Dorsolateral prefrontal cortex (tissue), 120 donors: ENCODE measurements at regions of chr1 and their contacts with region 1.

Region 1: DNA sequence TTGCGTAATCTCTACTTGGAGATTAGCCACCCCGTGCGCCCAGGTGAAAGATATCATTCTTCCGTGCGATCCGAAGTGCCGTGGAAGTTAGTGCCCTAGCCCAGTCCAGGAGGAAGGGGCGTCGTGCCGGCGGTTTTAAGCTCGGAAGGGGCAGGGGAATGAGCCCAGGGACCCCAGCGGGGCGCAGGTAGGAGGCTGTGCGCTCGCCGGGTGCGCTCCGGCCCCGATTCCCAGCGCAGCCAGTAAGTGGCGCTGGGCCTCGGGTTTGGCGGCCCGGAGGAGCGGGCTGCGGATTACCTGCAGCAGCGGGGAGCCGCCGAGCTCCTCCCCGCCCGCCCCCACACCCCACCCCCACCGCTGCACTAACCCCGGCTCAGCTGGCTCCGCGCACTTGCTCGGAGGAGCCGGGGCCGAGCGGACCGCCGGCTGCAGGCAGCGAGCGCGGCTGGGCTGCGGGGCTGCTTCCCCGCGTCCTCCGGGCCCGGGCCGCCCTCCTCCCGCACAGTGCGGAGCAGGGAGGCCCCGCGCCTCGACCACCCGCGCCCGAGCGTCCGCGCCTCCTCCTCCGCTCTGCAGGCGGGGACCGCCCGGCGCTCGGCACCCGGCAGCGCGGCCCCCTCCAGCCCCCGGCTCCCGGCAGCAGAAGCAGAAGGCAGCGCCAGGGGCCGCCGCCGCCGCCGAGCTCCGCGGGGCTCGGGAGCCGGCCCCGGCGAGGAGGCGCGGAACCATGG is at the start of gene RYR2:
- DNase-seq: peak in 8 of 10 donors; percentile 20 to 80 (median 54)
- H3K4me3 ChIP-seq: peak within 1 kb of the TSS; percentile 39 to 79 (median 63)
- H3K27ac ChIP-seq: peak within 1 kb of the TSS in 52 of 59 donors; percentile 16 to 94 (median 78)
- H3K27me3 ChIP-seq: peaks cover 0 to 42% (median 15%) of the 10 kb centered on the region in 45 donors
- CTCF ChIP-seq: peak in 54 of 56 donors; percentile 35 to 73 (median 57)
- total RNA-seq, gene RYR2: 38.4 to 262 (median 90.5) TPM

Region 2: DNA sequence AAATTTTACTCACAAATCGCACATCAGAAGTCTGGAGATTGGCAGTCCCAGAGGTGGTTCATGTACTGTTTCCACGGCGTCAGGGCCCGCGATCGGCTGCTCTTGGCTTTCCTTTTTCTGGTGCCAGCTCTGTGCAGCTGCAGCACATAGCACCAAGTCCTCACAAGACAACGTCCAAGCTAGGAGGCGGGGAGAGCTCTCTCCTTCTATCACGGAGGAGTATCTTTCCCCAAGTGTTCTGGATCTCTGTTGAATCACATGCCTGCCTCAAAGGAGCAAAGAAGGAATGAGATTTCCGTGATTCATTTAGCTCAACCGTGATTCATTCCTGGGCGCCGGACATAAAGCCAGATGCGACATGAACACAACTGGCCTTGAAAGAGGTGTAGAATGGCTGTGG is 63.2 kb before region 1 on chr1:
- intact Hi-C with region 1: loop called in 1 of 2 experiments (anchors 2 kb)
- DNase-seq: peak in 8 of 10 donors; percentile 31 to 77 (median 58)
- H3K4me3 ChIP-seq: peak overlapping the region in 6 of 59 donors; percentile 6 to 33 (median 14)
- H3K27ac ChIP-seq: peak overlapping the region in 36 of 59 donors; percentile 5 to 77 (median 50)
- H3K27me3 ChIP-seq: no peaks in the 10 kb centered on the region
- CTCF ChIP-seq: no peak

Region 3: GRCh38 chr1:237062976-237063375 is 21.0 kb after region 1 on chr1:
- intact Hi-C with region 1: no loop called
- DNase-seq: no peak
- H3K4me3 ChIP-seq: no peak overlapping the region
- H3K27ac ChIP-seq: no peak overlapping the region
- H3K27me3 ChIP-seq: no peaks in the 10 kb centered on the region
- CTCF ChIP-seq: no peak

Region 4: GRCh38 chr1:237146241-237146640 is 104.3 kb after region 1 on chr1:
- intact Hi-C with region 1: loop called in 1 of 2 experiments (anchors 10 kb)
- DNase-seq: no peak
- H3K4me3 ChIP-seq: peak overlapping the region in 2 of 59 donors; percentile 12 to 14
- H3K27ac ChIP-seq: peak overlapping the region in 12 of 59 donors; percentile 2 to 52 (median 26)
- H3K27me3 ChIP-seq: no peaks in the 10 kb centered on the region
- CTCF ChIP-seq: no peak

Region 5: GRCh38 chr1:237386362-237387143 is 344.6 kb after region 1 on chr1:
- intact Hi-C with region 1: loop called in 1 of 2 experiments (anchors 5 kb)
- DNase-seq: no peak
- H3K4me3 ChIP-seq: no peak overlapping the region
- H3K27ac ChIP-seq: no peak overlapping the region
- H3K27me3 ChIP-seq: no peaks in the 10 kb centered on the region
- CTCF ChIP-seq: peak in 55 of 56 donors; percentile 11 to 86 (median 67)